ENCODE measurements at regions of chr18 and their contacts with region 1.

Region 1: DNA sequence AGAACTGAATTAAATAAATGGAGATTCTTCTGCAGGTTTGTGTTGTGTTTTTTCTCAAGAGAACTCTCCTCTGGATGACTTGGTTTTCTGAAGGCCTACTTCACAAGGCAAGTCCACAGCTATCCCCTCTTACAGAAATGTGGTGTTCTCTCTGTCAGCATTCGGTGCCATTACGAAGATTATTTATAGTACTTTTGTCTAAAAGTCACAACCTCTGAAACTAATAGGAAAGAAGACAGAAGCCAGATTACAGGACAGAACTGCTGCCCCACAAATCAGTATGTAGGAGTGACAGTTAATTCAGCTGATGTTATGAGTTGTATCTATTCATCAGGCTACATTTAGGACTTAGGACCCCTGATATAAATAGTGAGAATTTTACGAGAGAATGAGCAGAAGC is 413.5 kb downstream of the TMX3 start:
- DNase-seq: no peak
- ATAC-seq: no peak
- H3K4me3 ChIP-seq: no peak overlapping the region
- H3K27ac ChIP-seq: no peak overlapping the region
- H3K4me1 ChIP-seq: no peaks in the 10 kb centered on the region
- H3K27me3 ChIP-seq: no peaks in the 10 kb centered on the region
- CTCF ChIP-seq: no peak
- POLR2A ChIP-seq: no peak

Region 2: DNA sequence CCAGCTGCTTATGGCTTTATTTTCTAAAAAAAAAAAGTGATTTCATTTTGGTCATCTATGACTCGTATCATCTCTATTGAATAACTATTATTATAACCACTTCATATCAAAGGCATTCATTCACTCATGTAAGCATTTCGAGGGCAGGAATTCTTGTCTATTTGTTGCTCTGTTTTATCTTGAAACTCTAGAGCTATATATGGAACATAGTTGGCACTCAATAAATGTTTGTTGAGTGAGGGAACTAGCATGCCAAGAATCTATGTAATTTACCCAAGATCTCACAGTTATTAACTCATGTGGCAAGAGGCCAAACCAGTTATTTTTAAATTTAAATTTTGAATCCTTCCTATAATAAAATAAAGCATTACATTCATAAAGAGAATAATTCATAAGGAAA is 56.7 kb before region 1 on chr18:
- intact Hi-C with region 1: no loop called
- DNase-seq: no peak
- ATAC-seq: no peak
- H3K4me3 ChIP-seq: no peak overlapping the region
- H3K27ac ChIP-seq: no peak overlapping the region
- H3K4me1 ChIP-seq: no peaks in the 10 kb centered on the region
- H3K27me3 ChIP-seq: no peaks in the 10 kb centered on the region
- CTCF ChIP-seq: no peak
- POLR2A ChIP-seq: no peak

Region 3: DNA sequence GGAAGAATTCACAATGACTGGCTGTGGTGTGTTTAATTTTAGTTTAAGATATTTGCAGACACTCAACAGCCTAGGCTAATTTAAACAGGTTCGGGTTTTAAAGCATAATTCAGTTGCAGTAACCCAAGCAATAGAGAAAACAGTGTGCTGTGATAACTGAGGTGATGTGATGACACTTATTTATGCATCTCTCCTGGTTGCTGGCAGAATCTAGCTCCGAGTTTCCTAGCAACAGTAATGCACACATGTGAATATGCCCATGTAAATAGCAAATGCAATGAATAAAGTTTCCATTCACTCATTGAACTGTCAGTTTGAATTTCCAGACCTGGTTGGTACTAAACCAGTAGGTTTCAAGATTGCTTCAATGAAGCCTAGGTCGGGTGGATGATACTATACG is 13.0 kb before region 1 on chr18:
- intact Hi-C with region 1: loop called in 1 of 10 experiments (anchors 1 kb)
- DNase-seq: no peak
- ATAC-seq: no peak
- H3K4me3 ChIP-seq: no peak overlapping the region
- H3K27ac ChIP-seq: no peak overlapping the region
- H3K4me1 ChIP-seq: no peaks in the 10 kb centered on the region
- H3K27me3 ChIP-seq: no peaks in the 10 kb centered on the region
- CTCF ChIP-seq: no peak
- POLR2A ChIP-seq: no peak